Heart right ventricle (tissue), 16 donors: ENCODE measurements at regions of chr6 and their contacts with region 1.

Region 1: GRCh38 chr6:42970871-42971612 is 7.9 kb downstream of the PEX6 start:
- DNase-seq: no peak
- ATAC-seq: peak in 5 of 8 donors; percentile 20 to 45 (median 37)
- H3K4me3 ChIP-seq: no peak overlapping the region
- H3K27ac ChIP-seq: no peak overlapping the region
- H3K4me1 ChIP-seq: peaks cover 0 to 12% (median 6%) of the 10 kb centered on the region in 9 donors
- H3K27me3 ChIP-seq: no peaks in the 10 kb centered on the region
- CTCF ChIP-seq: no peak

Region 2: DNA sequence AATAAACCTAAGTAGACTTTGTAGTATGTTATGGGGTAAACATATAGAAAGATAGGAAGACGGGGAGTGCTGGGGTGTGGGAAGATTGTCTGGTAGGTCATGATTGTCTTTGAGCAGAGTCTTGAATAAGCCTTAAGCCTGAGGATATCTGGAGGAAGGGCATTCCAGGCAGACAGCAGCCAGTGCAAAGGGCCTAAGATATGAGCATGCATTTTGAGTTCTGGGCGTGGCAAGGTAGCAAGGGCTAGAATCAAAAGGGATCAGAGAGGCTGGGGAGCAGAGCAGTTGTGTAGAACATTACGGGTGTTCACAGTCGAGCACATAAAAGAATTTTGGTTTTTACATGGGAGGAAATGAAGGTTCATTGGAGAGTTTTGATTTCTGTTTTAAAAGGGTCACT is 174.9 kb before region 1 on chr6:
- intact Hi-C with region 1: no loop called
- DNase-seq: no peak
- ATAC-seq: no peak
- H3K4me3 ChIP-seq: no peak overlapping the region
- H3K27ac ChIP-seq: no peak overlapping the region
- H3K4me1 ChIP-seq: peaks cover 0 to 20% (median 4%) of the 10 kb centered on the region in 9 donors
- H3K27me3 ChIP-seq: no peaks in the 10 kb centered on the region
- CTCF ChIP-seq: no peak

Region 3: DNA sequence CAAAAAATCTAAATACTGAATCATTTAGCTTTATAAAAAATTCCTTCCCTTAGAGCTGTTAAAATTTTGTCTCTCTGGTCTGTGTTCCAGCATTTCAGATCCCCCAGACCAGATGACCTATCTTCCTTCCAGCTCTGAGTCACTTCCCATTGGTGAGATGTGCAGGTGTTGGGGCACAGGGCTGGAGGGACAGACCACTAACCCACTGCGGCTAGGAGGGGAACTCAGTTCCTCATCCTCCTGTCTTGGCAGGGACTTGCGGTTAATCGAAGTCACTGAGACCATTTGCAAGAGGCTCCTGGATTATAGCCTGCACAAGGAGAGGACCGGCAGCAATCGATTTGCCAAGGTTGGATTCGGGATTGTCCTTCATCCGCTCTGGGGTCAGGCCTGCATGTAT is 35.7 kb before region 1 on chr6:
- intact Hi-C with region 1: loop called in 3 of 10 experiments (anchors 2 to 5 kb)
- DNase-seq: no peak
- ATAC-seq: no peak
- H3K4me3 ChIP-seq: no peak overlapping the region
- H3K27ac ChIP-seq: no peak overlapping the region
- H3K4me1 ChIP-seq: peaks cover 0 to 47% (median 12%) of the 10 kb centered on the region in 9 donors
- H3K27me3 ChIP-seq: no peaks in the 10 kb centered on the region
- CTCF ChIP-seq: no peak

Region 4: DNA sequence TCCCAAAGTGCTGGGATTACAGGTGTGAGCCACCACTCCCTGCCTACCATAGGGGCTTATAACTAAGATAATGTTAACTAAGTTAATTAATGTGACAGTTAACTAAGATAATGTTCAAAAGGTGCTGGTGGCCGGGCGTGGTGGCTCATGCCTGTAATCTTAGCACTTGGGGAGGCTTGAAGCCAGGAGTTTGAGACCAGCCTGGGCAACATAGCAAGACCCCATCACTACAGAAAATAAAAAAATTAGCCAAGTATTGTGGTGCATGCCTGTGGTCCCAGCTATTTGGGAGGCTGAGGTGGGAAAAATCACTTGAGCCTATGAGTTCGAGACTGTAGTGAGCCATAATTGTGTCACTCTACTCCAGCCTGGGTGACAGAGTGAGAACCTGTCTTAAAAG is 167.2 kb after region 1 on chr6:
- intact Hi-C with region 1: no loop called
- DNase-seq: no peak
- ATAC-seq: no peak
- H3K4me3 ChIP-seq: no peak overlapping the region
- H3K27ac ChIP-seq: no peak overlapping the region
- H3K4me1 ChIP-seq: peaks cover 0 to 6% (median 4%) of the 10 kb centered on the region in 9 donors
- H3K27me3 ChIP-seq: no peaks in the 10 kb centered on the region
- CTCF ChIP-seq: no peak